Left ventricle myocardium inferior (tissue), 1 donor: ENCODE measurements at regions of chr11 and their contacts with region 1.

Region 1: DNA sequence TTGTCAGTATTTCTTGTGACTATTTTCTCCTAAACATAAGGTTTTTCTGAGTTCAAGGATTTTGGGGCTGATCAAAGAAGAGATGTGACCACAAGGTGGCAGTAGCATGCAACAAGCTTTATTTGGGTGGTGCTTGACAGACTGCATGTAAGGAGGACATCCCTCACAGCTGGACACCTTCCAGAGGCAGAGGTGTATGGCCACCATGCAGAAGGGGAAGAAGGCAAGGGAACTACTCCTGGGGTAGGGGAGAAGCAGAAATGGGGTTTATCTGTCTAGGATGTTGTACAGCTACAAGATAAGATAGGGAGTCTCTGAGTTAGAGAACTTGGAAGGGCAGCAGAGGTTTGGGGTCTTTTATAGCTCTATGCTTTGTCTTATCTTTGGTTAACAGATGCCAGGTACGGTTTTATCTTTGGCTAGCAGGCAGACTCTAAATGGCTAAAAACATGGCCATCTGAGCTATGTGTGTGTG is 5.1 kb upstream of the BIRC2 start:
- DNase-seq: peak; percentile 40
- H3K4me3 ChIP-seq: no peak overlapping the region
- H3K27ac ChIP-seq: no peak overlapping the region
- H3K4me1 ChIP-seq: peaks cover 7% of the 10 kb centered on the region
- H3K27me3 ChIP-seq: no peaks in the 10 kb centered on the region
- CTCF ChIP-seq: peak; percentile 87

Region 2: DNA sequence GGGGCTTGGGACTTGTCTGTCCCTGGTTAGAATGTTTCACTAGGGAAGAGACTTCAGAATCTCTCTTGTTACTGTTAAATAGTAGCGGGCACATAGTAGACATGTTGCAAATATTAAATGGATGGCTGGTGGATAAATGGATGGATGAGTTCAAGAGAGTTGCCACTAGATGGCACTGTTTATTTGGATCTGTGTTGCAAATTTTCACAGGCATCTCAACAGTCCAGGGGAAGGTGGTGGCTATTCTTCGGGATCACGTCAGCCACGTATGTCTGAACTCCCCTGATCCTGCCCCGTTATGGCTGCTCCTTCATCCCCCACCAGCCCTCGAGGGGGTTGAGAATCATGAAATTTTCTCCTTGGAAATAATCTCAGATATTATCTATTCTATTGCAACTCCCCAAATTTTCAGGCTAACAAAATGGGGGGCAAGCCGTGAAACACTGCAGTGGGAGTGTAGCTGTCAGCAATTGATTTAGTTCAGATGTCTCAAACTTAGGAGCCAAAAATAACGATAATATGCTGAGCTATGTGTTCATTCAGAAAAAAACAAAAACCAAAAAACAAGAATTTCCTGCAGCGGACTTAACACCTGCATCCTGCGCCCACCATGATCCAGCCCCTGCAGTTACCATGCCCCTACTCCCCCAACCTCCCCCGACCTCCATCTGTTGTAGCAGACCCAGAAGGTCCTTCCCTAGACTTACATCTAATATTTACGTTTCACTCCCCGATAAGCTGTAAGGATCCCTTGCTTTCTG is 53.7 kb before region 1 on chr11:
- intact Hi-C with region 1: loop called (anchors 5 kb)
- DNase-seq: no peak
- H3K4me3 ChIP-seq: peak overlapping the region; percentile 48
- H3K27ac ChIP-seq: no peak overlapping the region
- H3K4me1 ChIP-seq: peaks cover 4% of the 10 kb centered on the region
- H3K27me3 ChIP-seq: no peaks in the 10 kb centered on the region
- CTCF ChIP-seq: peak; percentile 82

Region 3: DNA sequence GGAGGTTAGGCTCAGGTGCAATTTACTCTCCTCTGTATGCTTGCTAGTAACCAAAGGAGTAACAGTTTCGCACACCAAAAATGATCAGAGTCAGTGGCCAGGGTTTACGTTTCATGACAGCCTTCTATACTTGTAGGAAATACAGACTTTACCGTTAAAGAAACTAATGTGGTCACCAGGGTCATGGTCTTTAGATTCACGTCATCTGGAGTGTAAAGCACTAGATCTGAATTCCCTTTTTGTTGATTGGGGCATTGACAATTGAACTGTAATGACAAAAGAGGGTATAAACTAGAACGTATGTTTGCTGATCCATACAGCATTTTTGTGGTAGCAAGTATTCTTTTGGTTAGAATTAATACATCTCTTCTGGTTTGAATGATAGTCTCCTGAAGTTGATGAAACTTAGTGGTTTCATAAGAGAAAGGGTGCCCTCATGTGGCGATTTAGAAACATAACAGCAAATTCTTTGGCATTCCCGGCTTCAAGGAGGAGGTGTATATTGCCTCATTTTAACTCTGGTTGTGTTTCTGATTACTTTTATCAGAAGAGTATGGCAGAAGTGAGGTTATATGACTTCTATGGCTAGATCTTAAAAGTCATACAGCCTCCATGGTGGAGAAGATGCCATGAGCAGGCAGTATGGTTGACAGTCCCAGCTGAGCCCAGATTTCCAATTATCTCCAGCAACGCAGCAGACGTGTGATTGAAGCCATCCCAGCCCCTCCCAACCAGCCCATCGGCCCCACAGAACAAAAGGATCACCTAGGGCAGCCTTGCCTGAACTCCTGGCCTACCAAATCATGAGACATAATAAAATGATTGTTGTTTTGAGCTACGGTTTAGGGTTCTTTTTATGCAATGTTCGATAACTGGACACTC is 153.5 kb after region 1 on chr11:
- intact Hi-C with region 1: loop called (anchors 5 kb)
- DNase-seq: no peak
- H3K4me3 ChIP-seq: no peak overlapping the region
- H3K27ac ChIP-seq: no peak overlapping the region
- H3K4me1 ChIP-seq: no peaks in the 10 kb centered on the region
- H3K27me3 ChIP-seq: peaks cover 16% of the 10 kb centered on the region
- CTCF ChIP-seq: peak; percentile 83